Activated CD4-positive, alpha-beta memory T cell treated with anti-CD3 and anti-CD28 coated beads for 36 hours (primary cell): ENCODE measurements at regions of chr16 and their contacts with region 1.

Region 1: GRCh38 chr16:80580109-80580832 is 39.5 kb downstream of the DYNLRB2 start:
- DNase-seq: peak; percentile 89
- H3K4me3 Mint-ChIP-seq: peak overlapping the region; percentile 52
- H3K27ac Mint-ChIP-seq: peak overlapping the region; percentile 89
- H3K4me1 Mint-ChIP-seq: peaks cover 52% of the 10 kb centered on the region
- H3K27me3 Mint-ChIP-seq: peaks cover 2% of the 10 kb centered on the region

Region 2: DNA sequence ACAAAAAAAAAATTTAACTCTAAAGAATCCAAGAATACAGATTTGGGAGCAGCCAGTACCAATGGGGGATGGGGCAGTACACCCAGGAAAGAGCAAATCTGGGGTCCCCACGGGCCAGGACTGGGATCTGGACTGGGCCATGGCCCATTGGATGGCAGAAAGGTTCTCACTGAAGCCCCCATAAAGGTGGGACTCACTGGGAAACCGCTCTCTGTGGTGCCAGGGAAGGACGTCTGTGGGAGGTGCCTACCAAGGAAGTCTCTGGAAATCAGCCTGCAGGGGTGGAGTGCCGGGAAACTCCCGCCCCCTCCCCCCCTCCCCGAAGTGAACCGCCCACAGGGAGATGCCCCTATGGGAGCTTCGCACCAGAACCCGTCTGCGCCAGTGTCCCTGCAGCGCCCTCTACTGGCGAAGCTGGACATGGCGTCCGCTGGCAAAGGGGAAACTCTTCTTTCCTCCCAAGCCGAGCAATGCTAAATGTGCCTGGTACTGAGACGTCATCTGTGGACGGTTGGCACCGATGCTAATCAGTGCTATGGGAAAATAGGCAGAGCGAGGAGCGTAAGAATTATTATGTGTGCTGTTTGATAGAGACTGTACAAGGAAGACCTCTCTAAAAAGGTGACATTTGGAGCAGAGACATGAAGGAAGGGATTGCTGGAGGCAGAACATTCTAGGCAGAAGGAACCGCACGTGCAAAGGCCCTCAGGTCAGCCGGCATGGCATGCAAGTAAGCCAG is 1809.7 kb before region 1 on chr16:
- CTCF ChIA-PET with region 1: no interaction called
- POLR2A ChIA-PET with region 1: no interaction called
- intact Hi-C with region 1: loop called (anchors 10 kb)
- DNase-seq: peak; percentile 93
- H3K4me3 Mint-ChIP-seq: peak overlapping the region; percentile 65
- H3K27ac Mint-ChIP-seq: peak overlapping the region; percentile 87
- H3K4me1 Mint-ChIP-seq: peaks cover 80% of the 10 kb centered on the region
- H3K27me3 Mint-ChIP-seq: no peaks in the 10 kb centered on the region

Region 3: DNA sequence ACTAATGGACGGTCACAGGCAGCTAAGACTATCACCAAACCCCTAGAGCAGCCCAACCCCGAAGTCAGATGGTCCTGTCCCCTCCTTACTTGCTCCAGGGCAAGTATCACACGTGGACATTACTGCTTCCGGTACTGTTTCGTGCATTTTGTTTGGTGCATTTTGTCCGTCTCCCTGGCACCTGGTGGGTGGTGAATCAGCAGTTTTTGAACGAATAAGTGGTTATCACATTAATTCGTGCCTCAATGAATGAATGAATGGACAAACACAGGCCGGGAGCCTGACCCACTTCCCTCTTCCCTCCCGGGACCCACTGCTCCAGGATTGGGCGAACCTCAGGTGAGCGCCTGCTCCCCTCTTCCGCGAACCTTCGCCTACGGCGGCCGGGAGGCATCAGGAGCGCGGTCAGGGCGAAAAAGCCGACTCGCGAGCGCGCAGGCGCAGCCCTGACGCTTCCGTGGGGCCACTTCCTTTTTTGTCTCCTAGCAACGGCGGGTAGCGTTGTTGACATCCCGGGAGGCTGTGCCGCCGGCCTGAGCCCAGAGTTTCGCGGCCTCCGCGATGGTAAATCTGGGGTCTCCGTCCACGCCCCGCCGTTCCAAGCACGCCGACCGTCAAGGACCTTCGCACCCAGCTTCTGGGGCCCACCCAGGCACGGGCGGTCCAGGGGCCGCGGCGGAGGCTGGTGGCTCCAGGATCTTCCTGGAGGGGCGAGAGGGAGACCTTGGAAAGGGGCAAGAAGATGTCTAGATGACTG is 39.6 kb before region 1 on chr16 and contains the start of gene DYNLRB2:
- CTCF ChIA-PET with region 1: interaction called, 6 read pairs
- POLR2A ChIA-PET with region 1: no interaction called
- intact Hi-C with region 1: loop called (anchors 1 kb)
- DNase-seq: peak; percentile 96
- H3K4me3 Mint-ChIP-seq: peak within 1 kb of the TSS; percentile 95
- H3K27ac Mint-ChIP-seq: peak within 1 kb of the TSS; percentile 94
- H3K4me1 Mint-ChIP-seq: peaks cover 26% of the 10 kb centered on the region
- H3K27me3 Mint-ChIP-seq: no peaks in the 10 kb centered on the region
- total RNA-seq, gene DYNLRB2: not detected

Region 4: GRCh38 chr16:80656711-80657150 is 76.5 kb after region 1 on chr16:
- CTCF ChIA-PET with region 1: no interaction called
- POLR2A ChIA-PET with region 1: interaction called, 3 read pairs
- intact Hi-C with region 1: loop called (anchors 1 kb)
- DNase-seq: peak; percentile 62
- H3K4me3 Mint-ChIP-seq: peak overlapping the region; percentile 73
- H3K27ac Mint-ChIP-seq: peak overlapping the region; percentile 76
- H3K4me1 Mint-ChIP-seq: peaks cover 29% of the 10 kb centered on the region
- H3K27me3 Mint-ChIP-seq: no peaks in the 10 kb centered on the region

Region 5: DNA sequence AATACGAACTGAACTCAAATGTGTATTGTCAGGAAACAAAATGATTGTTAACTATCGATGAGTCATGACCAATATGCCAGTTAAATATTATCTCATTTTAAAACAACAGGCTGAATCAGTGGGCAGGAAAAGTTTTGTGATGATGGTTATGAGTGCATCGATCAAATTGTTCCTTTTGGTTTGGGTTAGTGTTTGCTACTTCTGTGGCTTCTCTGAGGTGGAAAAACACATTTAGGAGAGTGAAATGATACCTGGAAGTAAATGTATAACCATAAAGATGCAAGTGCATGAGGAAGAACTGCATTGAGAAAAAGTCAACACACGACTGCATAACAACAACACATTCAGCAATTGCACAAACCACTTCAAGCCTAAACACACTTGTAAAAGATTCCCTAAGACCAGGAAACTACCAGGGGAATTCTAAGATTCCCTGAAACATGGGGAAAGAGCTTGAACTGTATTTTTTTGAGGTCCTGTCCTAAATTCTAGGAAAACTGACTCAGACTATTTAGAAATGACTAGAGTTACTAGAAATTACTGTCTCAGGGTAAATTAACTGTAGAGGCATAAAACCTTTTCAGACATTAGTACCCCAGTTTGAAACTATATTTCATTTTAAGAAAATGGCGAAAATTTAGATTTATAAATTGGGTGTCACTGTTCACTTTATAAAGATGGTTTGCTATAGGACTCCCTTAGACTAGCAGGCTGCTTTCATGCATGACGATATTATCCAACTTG is 179.3 kb after region 1 on chr16:
- CTCF ChIA-PET with region 1: no interaction called
- POLR2A ChIA-PET with region 1: interaction called, 3 read pairs
- intact Hi-C with region 1: loop called (anchors 1 kb)
- DNase-seq: no peak
- H3K4me3 Mint-ChIP-seq: peak overlapping the region; percentile 35
- H3K27ac Mint-ChIP-seq: peak overlapping the region; percentile 82
- H3K4me1 Mint-ChIP-seq: peaks cover 21% of the 10 kb centered on the region
- H3K27me3 Mint-ChIP-seq: no peaks in the 10 kb centered on the region

Region 6: DNA sequence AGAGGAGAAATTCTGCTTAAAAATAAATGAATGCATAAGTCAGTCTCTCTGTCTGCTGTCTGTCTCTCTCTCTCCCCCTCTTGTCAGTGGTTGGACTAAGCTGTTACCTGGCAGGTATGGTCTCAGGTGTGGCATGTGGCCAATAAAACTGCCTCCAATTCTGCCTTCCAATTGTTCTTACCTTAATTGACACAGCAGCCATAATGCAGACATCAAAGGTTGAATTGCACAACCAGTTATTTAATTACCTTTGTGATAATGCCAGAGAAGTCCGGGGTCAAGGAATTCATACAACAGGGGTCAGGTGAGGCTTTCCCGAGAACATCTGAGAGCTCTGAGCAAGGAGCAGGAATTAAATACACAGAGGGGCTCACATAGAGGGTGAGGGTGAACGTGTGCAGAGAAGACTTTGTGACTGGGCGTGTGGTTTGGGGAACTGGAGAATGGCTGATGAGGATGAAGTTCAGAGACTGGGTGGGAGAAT is 302.9 kb after region 1 on chr16:
- CTCF ChIA-PET with region 1: no interaction called
- POLR2A ChIA-PET with region 1: no interaction called
- intact Hi-C with region 1: no loop called
- DNase-seq: no peak
- H3K4me3 Mint-ChIP-seq: no peak overlapping the region
- H3K27ac Mint-ChIP-seq: no peak overlapping the region
- H3K4me1 Mint-ChIP-seq: no peaks in the 10 kb centered on the region
- H3K27me3 Mint-ChIP-seq: peaks cover 21% of the 10 kb centered on the region

Region 7: DNA sequence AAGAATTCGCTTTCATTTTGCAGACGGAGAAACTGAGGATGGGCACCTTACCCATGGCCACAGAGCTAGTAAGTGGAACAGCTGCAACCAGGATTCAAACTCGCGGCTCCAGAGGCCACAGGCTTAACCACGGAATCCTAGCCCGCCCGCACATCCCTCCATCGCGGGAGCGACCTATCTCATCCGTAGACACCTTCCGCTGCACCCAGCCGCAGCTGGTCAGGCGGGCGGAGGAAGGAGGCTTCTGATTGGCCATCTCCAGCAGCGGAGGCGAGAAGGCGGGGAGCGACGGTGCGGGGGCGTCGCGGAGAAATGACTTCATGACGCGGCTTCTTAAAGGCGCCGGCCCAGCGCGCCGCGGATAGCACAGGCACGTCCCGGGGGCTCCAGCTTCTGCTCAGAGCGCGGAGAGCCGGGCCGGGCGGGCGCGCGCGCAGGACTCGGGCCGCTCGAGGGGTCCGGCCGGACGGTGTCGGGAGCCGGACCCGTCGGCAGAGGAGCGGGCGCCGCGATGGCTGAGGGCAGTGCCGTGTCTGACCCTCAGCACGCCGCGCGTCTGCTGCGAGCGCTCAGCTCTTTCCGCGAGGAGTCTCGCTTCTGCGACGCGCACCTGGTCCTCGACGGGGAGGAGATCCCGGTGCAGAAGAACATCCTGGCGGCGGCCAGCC is 734.5 kb after region 1 on chr16 and contains the start of gene GAN:
- CTCF ChIA-PET with region 1: no interaction called
- POLR2A ChIA-PET with region 1: no interaction called
- intact Hi-C with region 1: loop called (anchors 5 kb)
- DNase-seq: peak; percentile 98
- H3K4me3 Mint-ChIP-seq: peak within 1 kb of the TSS; percentile 84
- H3K27ac Mint-ChIP-seq: peak within 1 kb of the TSS; percentile 71
- H3K4me1 Mint-ChIP-seq: peaks cover 61% of the 10 kb centered on the region
- H3K27me3 Mint-ChIP-seq: no peaks in the 10 kb centered on the region
- total RNA-seq, gene GAN: 13.6 to 14.5 TPM